ENCODE measurements at regions of chr11 and their contacts with region 1.

Region 1: GRCh38 chr11:32052218-32052617 is 38.7 kb upstream of the RCN1 start:
- DNase-seq: no peak
- ATAC-seq: peak; percentile 87
- H3K4me3 ChIP-seq: no peak overlapping the region
- H3K27ac ChIP-seq: no peak overlapping the region
- H3K4me1 ChIP-seq: no peaks in the 10 kb centered on the region
- H3K27me3 ChIP-seq: no peaks in the 10 kb centered on the region
- CTCF ChIP-seq: peak; percentile 63 to 77 (median 64)
- EP300 ChIP-seq: no peak
- POLR2A ChIP-seq: no peak
- RAD21 ChIP-seq: peak; percentile 84

Region 2: GRCh38 chr11:31879681-31880080 is 172.5 kb before region 1 on chr11:
- CTCF ChIA-PET with region 1: no interaction called
- POLR2A ChIA-PET with region 1: no interaction called
- RAD21 ChIA-PET with region 1: no interaction called
- SMC1A ChIA-PET with region 1: no interaction called
- in situ Hi-C with region 1: no loop called
- intact Hi-C with region 1: no loop called
- DNase-seq: no peak
- ATAC-seq: no peak
- H3K4me3 ChIP-seq: no peak overlapping the region
- H3K27ac ChIP-seq: no peak overlapping the region
- H3K4me1 ChIP-seq: no peaks in the 10 kb centered on the region
- H3K27me3 ChIP-seq: peaks cover 0 to 8% of the 10 kb centered on the region in 2 experiments
- CTCF ChIP-seq: no peak
- EP300 ChIP-seq: no peak
- POLR2A ChIP-seq: no peak
- RAD21 ChIP-seq: no peak

Region 3: GRCh38 chr11:32062540-32062939 is 10.3 kb after region 1 on chr11:
- CTCF ChIA-PET with region 1: interaction called, 15 read pairs
- POLR2A ChIA-PET with region 1: no interaction called
- RAD21 ChIA-PET with region 1: no interaction called
- SMC1A ChIA-PET with region 1: interaction called, 3 read pairs
- in situ Hi-C with region 1: no loop called
- intact Hi-C with region 1: no loop called
- DNase-seq: no peak
- ATAC-seq: no peak
- H3K4me3 ChIP-seq: no peak overlapping the region
- H3K27ac ChIP-seq: no peak overlapping the region
- H3K4me1 ChIP-seq: no peaks in the 10 kb centered on the region
- H3K27me3 ChIP-seq: no peaks in the 10 kb centered on the region
- CTCF ChIP-seq: no peak
- EP300 ChIP-seq: no peak
- POLR2A ChIP-seq: no peak
- RAD21 ChIP-seq: no peak

Region 4: GRCh38 chr11:32090545-32091373 is 38.5 kb after region 1 on chr11 and contains the start of gene RCN1:
- CTCF ChIA-PET with region 1: interaction called, 7 read pairs
- POLR2A ChIA-PET with region 1: no interaction called
- RAD21 ChIA-PET with region 1: interaction called, 7 read pairs
- SMC1A ChIA-PET with region 1: interaction called, 7 read pairs
- in situ Hi-C with region 1: no loop called
- intact Hi-C with region 1: loop called (anchors 2 kb)
- DNase-seq: no peak
- ATAC-seq: peak; percentile 80
- H3K4me3 ChIP-seq: peak within 1 kb of the TSS; percentile 94
- H3K27ac ChIP-seq: peak within 1 kb of the TSS; percentile 95
- H3K4me1 ChIP-seq: peaks cover 13% of the 10 kb centered on the region
- H3K27me3 ChIP-seq: no peaks in the 10 kb centered on the region
- CTCF ChIP-seq: no peak
- EP300 ChIP-seq: no peak
- POLR2A ChIP-seq: peak; percentile 78
- RAD21 ChIP-seq: no peak
- polyA plus RNA-seq, gene RCN1: 17.6 to 37.4 TPM

Region 5: GRCh38 chr11:32154275-32154674 is 102.1 kb after region 1 on chr11:
- CTCF ChIA-PET with region 1: interaction called, 63 read pairs
- POLR2A ChIA-PET with region 1: interaction called, 3 read pairs
- RAD21 ChIA-PET with region 1: interaction called, 24 read pairs
- SMC1A ChIA-PET with region 1: interaction called, 61 read pairs
- in situ Hi-C with region 1: no loop called
- intact Hi-C with region 1: loop called (anchors 1 kb)
- DNase-seq: peak; percentile 62
- ATAC-seq: peak; percentile 72
- H3K4me3 ChIP-seq: no peak overlapping the region
- H3K27ac ChIP-seq: peak overlapping the region; percentile 42; the same call in 1 of the 2 replicates
- H3K4me1 ChIP-seq: peaks cover 6% of the 10 kb centered on the region; the same call in 1 of the 2 replicates
- H3K27me3 ChIP-seq: no peaks in the 10 kb centered on the region
- CTCF ChIP-seq: peak in 2 of 3 experiments; percentile 13 to 46; a peak in 2 of 6 replicates
- EP300 ChIP-seq: no peak
- POLR2A ChIP-seq: no peak
- RAD21 ChIP-seq: peak; percentile 64

Region 6: DNA sequence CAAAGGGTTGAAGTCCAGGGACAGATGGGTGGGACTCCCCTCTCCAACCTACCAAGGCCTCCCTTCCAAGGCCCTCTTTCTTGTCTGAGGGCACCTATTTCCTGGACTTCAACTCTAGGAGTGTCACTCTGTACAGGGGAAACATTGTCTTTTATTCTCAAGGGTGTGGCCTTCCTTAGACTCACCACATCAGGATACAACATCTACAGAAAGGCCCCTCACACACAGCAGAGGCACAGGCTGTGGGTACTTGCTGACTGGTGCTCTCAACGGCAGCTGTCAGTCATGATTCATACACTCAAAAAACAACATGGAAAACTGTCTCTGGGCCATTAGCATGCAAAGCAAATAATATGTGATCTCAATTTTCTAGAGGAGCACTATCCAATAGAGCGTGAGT is 116.7 kb after region 1 on chr11:
- CTCF ChIA-PET with region 1: interaction called, 306 read pairs
- POLR2A ChIA-PET with region 1: no interaction called
- RAD21 ChIA-PET with region 1: interaction called, 50 read pairs
- SMC1A ChIA-PET with region 1: interaction called, 205 read pairs
- in situ Hi-C with region 1: loop called (anchors 5 kb)
- intact Hi-C with region 1: no loop called
- DNase-seq: no peak
- ATAC-seq: no peak
- H3K4me3 ChIP-seq: no peak overlapping the region
- H3K27ac ChIP-seq: no peak overlapping the region
- H3K4me1 ChIP-seq: no peaks in the 10 kb centered on the region; the same call in 1 of the 2 replicates
- H3K27me3 ChIP-seq: no peaks in the 10 kb centered on the region; a peak in 1 of 4 replicates
- CTCF ChIP-seq: no peak
- EP300 ChIP-seq: no peak
- POLR2A ChIP-seq: no peak
- RAD21 ChIP-seq: no peak

Measured in GM12878 (cell line).